ENCODE measurements at regions of chr1 and their contacts with region 1.

Region 1: DNA sequence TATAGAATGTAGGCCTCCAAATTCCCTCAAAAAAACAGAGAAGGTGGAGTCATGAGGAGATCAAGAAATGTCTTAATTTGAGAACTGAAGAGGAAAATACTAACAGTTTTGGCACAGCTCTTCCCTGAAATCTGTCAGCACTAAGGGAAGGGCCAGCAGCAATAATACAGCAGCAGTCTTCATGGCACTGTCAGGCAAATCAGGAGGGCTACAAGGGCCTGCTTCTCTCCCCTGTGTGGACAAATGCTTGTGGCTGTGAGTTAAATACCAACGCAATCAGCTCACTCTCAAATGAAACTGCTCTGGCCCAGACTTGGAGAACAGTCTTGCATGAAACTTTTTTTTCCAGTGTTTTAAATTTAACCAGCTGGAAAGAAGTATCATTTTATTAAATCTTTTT is 20.5 kb upstream of the CNN3 start:
- DNase-seq: no peak
- H3K4me3 ChIP-seq: no peak overlapping the region
- H3K27ac ChIP-seq: no peak overlapping the region
- H3K4me1 ChIP-seq: peaks cover 6% of the 10 kb centered on the region
- H3K27me3 ChIP-seq: no peaks in the 10 kb centered on the region
- CTCF ChIP-seq: no peak
- POLR2A ChIP-seq: no peak

Region 2: DNA sequence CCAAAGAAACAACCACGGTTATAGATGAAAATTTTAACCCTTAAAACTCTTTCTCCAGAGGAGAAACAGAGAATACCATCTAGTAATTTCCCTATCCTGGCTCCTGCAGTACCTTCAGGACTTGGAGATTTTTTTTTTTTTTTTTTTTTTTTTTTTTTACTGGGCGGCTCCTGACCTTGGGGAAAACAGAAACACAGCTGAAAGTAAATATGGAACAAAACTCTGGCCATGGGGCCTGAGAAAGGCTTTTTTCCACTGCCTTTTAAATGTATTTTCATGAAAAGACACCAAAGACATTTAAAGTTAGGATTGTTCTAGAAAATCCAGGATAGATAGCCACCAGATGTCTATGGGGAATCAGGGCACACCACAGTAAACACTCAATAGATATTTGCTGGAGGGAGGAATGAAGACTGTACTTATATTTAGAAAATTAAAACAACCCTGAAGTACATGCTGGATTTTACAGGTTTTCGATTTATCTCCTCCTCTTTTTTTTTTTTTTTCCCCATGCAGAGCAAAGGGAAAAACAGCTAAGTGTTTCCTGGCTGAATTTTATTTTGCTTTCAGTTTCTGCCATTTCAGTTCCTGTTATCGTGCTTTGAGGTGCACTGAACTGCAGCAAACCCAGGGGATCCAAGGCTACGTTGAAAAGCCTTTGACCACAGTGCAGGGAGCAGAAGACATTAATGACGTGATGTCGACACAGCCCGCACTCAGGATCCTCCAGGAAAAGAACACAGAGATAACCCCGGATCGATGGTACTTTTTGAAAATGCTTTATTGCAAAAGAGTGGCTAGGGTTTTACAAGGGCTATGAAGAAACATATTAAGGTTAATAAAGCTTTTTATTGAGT is 15.2 kb after region 1 on chr1:
- CTCF ChIA-PET with region 1: interaction called, 3 read pairs
- POLR2A ChIA-PET with region 1: no interaction called
- dilution Hi-C with region 1: no loop called
- intact Hi-C with region 1: loop called (anchors 2 kb)
- DNase-seq: peak; percentile 75
- H3K4me3 ChIP-seq: peak overlapping the region; percentile 22 to 68 (median 25)
- H3K27ac ChIP-seq: peak overlapping the region; percentile 48
- H3K4me1 ChIP-seq: peaks cover 23% of the 10 kb centered on the region
- H3K27me3 ChIP-seq: no peaks in the 10 kb centered on the region
- CTCF ChIP-seq: no peak
- POLR2A ChIP-seq: no peak

Region 3: GRCh38 chr1:95179205-95179986 is 232.0 kb after region 1 on chr1:
- CTCF ChIA-PET with region 1: no interaction called
- POLR2A ChIA-PET with region 1: no interaction called
- dilution Hi-C with region 1: no loop called
- intact Hi-C with region 1: no loop called
- DNase-seq: no peak
- H3K4me3 ChIP-seq: no peak overlapping the region
- H3K27ac ChIP-seq: no peak overlapping the region
- H3K4me1 ChIP-seq: no peaks in the 10 kb centered on the region
- H3K27me3 ChIP-seq: no peaks in the 10 kb centered on the region
- CTCF ChIP-seq: no peak
- POLR2A ChIP-seq: no peak